Activated CD4-positive, alpha-beta T cell treated with anti-CD3 and anti-CD28 coated beads, Interleukin-2, amount 10 ng/mL, durations not matched to agents 24 days and 14 days (primary cell): ENCODE measurements at regions of chr2 and their contacts with region 1.

Region 1: GRCh38 chr2:241734467-241735208 is at the start of gene D2HGDH:
- DNase-seq: peak; percentile 98
- H3K4me3 Mint-ChIP-seq: peak within 1 kb of the TSS; percentile 83
- H3K27ac Mint-ChIP-seq: peak within 1 kb of the TSS; percentile 65
- H3K4me1 Mint-ChIP-seq: peaks cover 42% of the 10 kb centered on the region
- H3K27me3 Mint-ChIP-seq: no peaks in the 10 kb centered on the region
- total RNA-seq, gene D2HGDH: 34.2 and 40.4 TPM in 2 replicates

Region 2: GRCh38 chr2:241637000-241637791 is 97.4 kb before region 1 on chr2 and contains the starts of genes ATG4B and THAP4:
- intact Hi-C with region 1: loop called (anchors 1 kb)
- DNase-seq: peak; percentile 95
- H3K4me3 Mint-ChIP-seq: peak within 1 kb of the TSS; percentile 89
- H3K27ac Mint-ChIP-seq: peak within 1 kb of the TSS; percentile 93
- H3K4me1 Mint-ChIP-seq: peaks cover 41% of the 10 kb centered on the region
- H3K27me3 Mint-ChIP-seq: no peaks in the 10 kb centered on the region
- total RNA-seq, gene ATG4B: 109 and 115 TPM in 2 replicates
- total RNA-seq, gene THAP4: 62.0 and 63.9 TPM in 2 replicates

Region 3: DNA sequence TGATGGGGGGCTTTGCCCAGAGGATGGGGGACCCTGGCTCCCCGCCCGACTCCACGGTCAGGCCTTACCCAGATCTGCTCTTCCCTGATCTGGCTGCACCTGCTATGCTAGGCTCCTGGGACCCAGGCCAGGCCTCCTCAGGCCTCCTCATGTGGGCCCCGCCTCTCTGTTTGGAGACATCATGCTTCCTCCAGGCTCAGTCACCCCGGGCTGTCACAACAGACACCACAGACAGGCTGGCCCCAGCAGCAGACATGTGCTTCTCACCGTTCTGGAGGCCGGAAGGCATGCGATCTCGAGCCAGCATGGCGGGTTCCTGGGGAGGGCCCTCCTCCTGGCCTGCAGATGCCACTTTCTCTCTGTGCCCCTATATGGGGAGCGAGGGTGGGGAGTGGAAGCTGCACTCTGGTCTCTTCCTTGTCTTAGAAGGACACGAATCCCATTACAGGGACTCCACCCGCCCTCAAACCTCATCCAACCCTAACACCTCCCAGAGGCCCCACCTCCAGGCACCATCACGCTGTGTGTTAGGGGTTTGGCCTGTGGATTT is 63.5 kb after region 1 on chr2:
- intact Hi-C with region 1: no loop called
- DNase-seq: peak; percentile 55
- H3K4me3 Mint-ChIP-seq: no peak overlapping the region
- H3K27ac Mint-ChIP-seq: no peak overlapping the region
- H3K4me1 Mint-ChIP-seq: no peaks in the 10 kb centered on the region
- H3K27me3 Mint-ChIP-seq: no peaks in the 10 kb centered on the region

Region 4: DNA sequence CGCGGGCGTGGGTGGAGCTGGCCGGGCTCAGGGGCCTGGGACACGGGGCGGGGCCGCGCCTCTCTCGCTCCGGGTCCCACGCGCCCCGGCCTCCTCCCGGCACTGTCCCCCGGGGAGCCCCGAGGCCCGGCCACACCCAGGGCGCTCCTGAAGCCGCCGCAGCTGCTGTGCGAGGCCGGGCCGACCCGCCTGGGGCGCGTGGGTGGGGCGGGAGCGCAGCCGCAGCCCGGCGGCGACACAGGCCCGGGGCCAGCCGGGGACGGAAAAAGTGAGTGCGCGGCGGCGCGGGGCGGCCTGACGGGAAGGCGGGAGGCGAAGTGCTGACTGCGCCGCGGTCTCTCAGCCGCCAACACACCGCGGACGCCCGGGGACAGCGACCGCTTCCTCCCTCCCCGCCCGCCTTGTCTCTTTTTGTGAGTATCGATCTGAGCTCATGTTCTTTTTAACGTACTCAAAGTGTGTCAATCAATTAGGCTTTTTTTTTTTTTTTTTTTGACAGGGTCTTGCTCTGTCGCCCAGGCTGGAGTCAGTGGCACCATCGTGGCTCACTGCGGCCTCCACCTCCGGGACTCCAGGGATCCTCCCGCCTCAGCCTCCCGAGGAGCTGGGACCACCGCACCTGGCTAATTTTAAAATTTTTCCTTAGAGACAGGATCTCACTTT is 109.6 kb after region 1 on chr2:
- intact Hi-C with region 1: loop called (anchors 1 kb)
- DNase-seq: peak; percentile 95
- H3K4me3 Mint-ChIP-seq: peak overlapping the region; percentile 73
- H3K27ac Mint-ChIP-seq: peak overlapping the region; percentile 89
- H3K4me1 Mint-ChIP-seq: peaks cover 34% of the 10 kb centered on the region
- H3K27me3 Mint-ChIP-seq: peaks cover 3% of the 10 kb centered on the region

Region 5: DNA sequence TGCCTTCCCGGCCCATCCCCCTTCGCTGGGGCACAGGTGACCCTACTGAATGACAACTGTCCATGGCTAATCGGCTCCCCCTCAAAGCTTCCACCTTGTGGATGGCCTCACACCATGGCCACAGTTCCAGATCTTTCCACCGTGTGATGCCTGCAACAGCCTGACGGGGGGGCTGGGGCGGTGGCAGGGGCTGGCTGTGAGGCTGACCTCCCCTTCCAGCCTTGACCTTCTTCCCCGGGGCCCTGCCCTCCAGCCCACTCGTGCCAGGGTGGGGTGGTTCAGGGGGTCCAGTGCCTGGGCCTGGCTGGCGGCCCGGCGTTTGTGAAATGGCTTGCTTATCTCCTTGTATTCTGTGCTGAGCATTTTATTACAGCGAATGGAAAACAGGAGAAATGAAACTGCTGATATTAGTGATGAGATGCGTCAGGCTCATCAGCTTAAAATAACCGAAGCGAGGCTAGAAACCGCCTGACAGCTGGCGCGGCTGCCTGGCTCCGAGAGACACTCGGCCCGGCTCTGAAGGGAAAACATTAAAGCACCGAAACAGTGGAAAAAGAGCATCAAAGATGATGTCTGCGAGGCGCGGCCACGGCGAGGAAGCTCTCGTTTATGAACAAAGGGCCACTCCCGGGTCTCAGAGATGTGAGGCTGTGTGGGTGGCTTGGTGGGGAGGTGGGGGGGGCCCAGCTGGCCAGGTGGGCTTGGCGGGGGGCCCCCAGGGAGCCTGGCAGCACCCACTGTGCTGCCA is 125.0 kb after region 1 on chr2:
- intact Hi-C with region 1: loop called (anchors 5 kb)
- DNase-seq: peak; percentile 86
- H3K4me3 Mint-ChIP-seq: peak overlapping the region; percentile 89
- H3K27ac Mint-ChIP-seq: peak overlapping the region; percentile 91
- H3K4me1 Mint-ChIP-seq: peaks cover 55% of the 10 kb centered on the region
- H3K27me3 Mint-ChIP-seq: peaks cover 5% of the 10 kb centered on the region